Activated naive CD4-positive, alpha-beta T cell treated with anti-CD3 and anti-CD28 coated beads for 36 hours (primary cell): ENCODE measurements at regions of chr15 and their contacts with region 1.

Region 1: GRCh38 chr15:63497642-63498467 is 6.5 kb upstream of the USP3 start:
- DNase-seq: peak; percentile 81
- H3K4me3 Mint-ChIP-seq: no peak overlapping the region
- H3K27ac Mint-ChIP-seq: no peak overlapping the region
- H3K4me1 Mint-ChIP-seq: peaks cover 82% of the 10 kb centered on the region
- H3K27me3 Mint-ChIP-seq: no peaks in the 10 kb centered on the region

Region 2: DNA sequence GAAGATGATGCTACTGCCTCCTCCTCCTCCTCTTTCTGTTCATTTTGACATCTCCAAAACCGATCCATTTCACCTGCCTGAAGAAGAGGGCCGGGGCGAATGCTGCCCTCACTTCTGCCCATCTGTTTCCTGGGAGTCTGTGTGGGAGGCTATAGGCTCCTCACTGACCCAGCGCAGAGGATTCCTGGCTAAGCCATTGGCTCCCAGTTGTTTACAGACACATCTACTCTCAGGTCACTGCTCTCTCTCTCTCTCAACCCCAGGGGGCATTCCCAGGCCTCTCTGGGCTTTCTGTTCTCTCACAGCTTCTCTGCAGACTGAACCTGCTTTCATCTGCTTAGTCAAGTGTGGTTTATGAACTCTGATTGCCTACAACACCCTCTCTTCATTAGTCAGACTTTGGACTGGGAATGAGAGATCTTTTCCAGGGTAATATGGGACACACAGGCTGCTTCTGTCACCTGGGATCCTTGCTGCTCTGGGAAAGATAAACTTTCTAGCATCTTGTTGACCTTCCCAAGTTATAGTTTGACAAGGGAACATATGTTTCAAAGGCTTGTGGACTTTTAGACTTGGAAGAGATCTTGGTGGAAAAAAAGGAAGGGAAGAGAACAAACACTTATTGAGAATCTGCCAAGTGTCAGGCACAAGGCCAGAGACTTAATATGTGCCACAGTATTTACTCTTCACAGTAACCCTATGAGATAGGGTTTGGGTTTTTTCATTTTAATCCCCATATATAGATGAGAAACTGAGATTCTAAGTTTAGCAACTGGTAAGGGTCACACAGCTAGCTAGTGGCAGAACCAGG is 23.7 kb before region 1 on chr15:
- CTCF ChIA-PET with region 1: interaction called, 19 read pairs
- intact Hi-C with region 1: loop called (anchors 1 kb)
- DNase-seq: peak; percentile 88
- H3K4me3 Mint-ChIP-seq: no peak overlapping the region
- H3K27ac Mint-ChIP-seq: peak overlapping the region; percentile 89
- H3K4me1 Mint-ChIP-seq: peaks cover 53% of the 10 kb centered on the region
- H3K27me3 Mint-ChIP-seq: no peaks in the 10 kb centered on the region

Region 3: DNA sequence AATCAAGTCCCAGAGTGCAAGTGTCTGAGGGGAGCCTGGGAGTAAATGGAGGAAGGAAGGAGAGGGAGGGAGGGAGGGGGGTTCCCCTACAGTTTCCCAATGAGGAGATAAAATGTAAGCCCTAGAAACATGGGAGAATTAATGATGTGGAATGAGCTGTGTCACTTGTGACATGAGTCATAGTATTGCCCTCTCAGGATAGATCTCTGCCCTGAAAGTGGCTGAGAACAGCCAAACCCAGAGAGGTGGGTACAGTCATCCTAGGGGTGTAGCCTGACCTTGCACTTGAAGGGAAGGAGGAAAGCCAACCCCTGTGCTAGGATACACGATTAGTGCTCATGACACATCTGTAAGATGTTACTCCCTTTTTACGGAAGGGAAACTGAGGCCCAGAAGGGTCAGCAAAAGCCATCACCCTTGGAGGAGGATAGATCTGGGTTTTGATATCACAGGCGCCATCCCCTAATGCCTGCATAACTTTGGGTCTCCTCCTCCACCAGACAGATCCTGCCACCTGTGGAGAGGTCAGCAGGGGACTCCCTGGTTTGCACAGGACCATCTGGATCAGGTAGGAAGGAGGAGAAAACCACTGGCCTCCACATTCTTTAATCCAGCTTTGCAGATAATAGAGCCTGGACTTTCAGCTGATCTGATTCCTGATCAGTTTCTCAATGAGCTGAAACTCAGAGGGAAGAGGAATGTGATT is 16.6 kb before region 1 on chr15:
- CTCF ChIA-PET with region 1: interaction called, 19 read pairs
- intact Hi-C with region 1: loop called (anchors 1 kb)
- DNase-seq: peak; percentile 73
- H3K4me3 Mint-ChIP-seq: no peak overlapping the region
- H3K27ac Mint-ChIP-seq: peak overlapping the region; percentile 89
- H3K4me1 Mint-ChIP-seq: peaks cover 81% of the 10 kb centered on the region
- H3K27me3 Mint-ChIP-seq: no peaks in the 10 kb centered on the region

Region 4: GRCh38 chr15:63517614-63518013 is 19.8 kb after region 1 on chr15:
- CTCF ChIA-PET with region 1: no interaction called
- intact Hi-C with region 1: no loop called
- DNase-seq: no peak
- H3K4me3 Mint-ChIP-seq: peak overlapping the region; percentile 11
- H3K27ac Mint-ChIP-seq: peak overlapping the region; percentile 46
- H3K4me1 Mint-ChIP-seq: peaks cover 86% of the 10 kb centered on the region
- H3K27me3 Mint-ChIP-seq: no peaks in the 10 kb centered on the region

Region 5: GRCh38 chr15:63544258-63545026 is 46.6 kb after region 1 on chr15:
- CTCF ChIA-PET with region 1: no interaction called
- intact Hi-C with region 1: no loop called
- DNase-seq: no peak
- H3K4me3 Mint-ChIP-seq: peak overlapping the region; percentile 17
- H3K27ac Mint-ChIP-seq: peak overlapping the region; percentile 9
- H3K4me1 Mint-ChIP-seq: peaks cover 47% of the 10 kb centered on the region
- H3K27me3 Mint-ChIP-seq: no peaks in the 10 kb centered on the region